ENCODE measurements at regions of chr2 and their contacts with region 1.

Region 1: DNA sequence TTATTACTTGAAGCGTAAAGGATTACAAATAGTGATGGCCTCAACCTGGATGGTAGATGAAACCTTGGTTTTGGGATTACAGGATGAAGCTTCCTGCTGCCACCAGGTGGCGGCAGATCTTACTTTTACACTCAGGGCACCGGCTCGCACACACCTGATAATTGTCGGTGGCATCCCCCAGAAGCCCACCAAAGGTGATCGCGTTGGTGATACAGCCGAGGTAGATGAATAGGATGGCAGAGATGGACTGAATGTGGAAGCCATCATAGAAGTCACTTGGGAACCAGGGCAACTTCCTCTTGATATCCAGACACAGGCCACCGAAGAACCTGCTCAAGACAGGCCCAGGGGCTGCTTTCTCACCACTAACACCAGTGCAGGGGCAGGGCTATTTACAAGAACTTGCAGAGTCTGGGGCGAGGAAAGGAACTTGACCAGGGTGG is 51.8 kb downstream of the MTHFD2 start:
- DNase-seq: no peak
- H3K4me3 ChIP-seq: no peak overlapping the region
- CTCF ChIP-seq: peak; percentile 67

Region 2: GRCh38 chr2:73896362-73897239 is 353.6 kb before region 1 on chr2:
- CTCF ChIA-PET with region 1: no interaction called
- POLR2A ChIA-PET with region 1: no interaction called
- DNase-seq: peak; percentile 53
- H3K4me3 ChIP-seq: peak overlapping the region; percentile 6
- CTCF ChIP-seq: no peak

Region 3: GRCh38 chr2:74104839-74105238 is 145.4 kb before region 1 on chr2:
- CTCF ChIA-PET with region 1: no interaction called
- POLR2A ChIA-PET with region 1: no interaction called
- DNase-seq: no peak
- H3K4me3 ChIP-seq: no peak overlapping the region
- CTCF ChIP-seq: no peak

Region 4: DNA sequence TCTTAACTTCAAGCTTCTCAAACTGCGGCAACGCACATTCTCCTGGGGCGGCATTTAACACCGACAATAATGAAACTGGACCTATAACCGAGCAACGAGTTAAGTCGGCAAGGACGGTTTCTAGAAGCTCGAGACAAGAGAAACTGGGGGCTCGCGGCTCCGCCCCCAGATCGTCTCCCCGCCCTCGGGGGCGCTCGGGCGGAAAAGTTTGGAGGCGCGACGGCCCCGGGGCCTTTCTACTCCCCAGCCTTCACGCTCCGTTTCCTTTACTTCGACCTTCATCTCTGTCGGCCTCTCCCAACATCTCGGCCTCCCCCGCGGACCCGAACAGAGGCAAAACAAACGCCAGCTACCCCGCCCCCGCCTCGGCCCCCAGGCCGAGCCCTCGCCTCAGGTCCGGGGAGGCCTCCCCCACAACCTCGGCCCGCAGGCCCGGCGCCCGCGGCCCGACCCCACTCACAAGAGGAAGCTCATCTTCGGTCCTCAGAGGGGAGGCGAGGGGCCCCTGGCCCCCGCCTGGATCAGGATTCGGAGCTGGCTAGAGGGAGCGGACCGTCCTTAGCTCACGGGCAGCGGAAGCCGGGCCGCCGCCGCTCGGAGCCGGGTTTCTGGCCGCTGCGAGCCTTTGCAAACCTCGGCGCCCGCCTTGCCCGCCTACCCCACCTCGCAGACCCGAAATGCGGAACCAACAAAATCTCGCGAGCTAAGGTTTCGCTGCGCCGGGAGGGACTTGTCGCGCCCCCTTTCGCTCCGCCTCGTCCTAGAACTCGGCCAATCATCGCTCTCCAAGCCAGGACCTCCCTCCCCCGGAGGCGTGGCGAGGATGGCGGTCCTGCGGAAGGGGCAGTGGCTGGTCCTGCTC is 71.8 kb before region 1 on chr2 and contains the start of gene MOB1A:
- CTCF ChIA-PET with region 1: no interaction called
- POLR2A ChIA-PET with region 1: no interaction called
- DNase-seq: peak; percentile 85
- H3K4me3 ChIP-seq: peak within 1 kb of the TSS; percentile 77
- CTCF ChIP-seq: no peak

Region 5: DNA sequence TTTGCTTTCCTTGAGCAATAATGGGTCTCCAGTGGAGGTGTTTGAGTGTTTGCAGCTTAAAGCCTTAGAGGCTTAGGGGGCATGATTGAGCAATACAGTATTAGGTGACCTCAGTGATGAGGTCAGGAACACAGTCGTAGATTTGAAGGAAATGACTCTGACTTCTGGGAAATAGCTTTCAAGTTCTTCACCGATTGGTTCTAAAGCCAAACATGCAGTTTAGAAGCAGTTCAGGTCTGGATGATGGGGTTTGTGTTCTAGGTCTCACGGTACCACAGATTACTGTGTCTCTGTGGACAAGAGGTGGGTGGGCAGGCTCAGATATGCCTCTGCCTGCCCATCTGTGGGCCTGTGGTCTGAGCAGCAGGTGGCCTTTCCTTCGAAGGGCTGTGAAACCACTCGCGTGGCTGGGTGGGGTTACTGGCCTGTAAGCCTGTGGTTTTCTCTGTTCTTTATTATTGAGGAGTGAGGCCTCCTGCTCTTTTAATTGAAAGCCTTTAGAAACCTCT is 44.0 kb before region 1 on chr2:
- CTCF ChIA-PET with region 1: interaction called, 10 read pairs
- POLR2A ChIA-PET with region 1: no interaction called
- DNase-seq: no peak
- H3K4me3 ChIP-seq: no peak overlapping the region
- CTCF ChIP-seq: no peak

Region 6: GRCh38 chr2:74238879-74239278 is 11.3 kb before region 1 on chr2:
- CTCF ChIA-PET with region 1: interaction called, 64 read pairs
- POLR2A ChIA-PET with region 1: no interaction called
- DNase-seq: no peak
- H3K4me3 ChIP-seq: no peak overlapping the region
- CTCF ChIP-seq: no peak

Region 7: GRCh38 chr2:74267068-74267467 is 16.9 kb after region 1 on chr2:
- CTCF ChIA-PET with region 1: interaction called, 55 read pairs
- POLR2A ChIA-PET with region 1: no interaction called
- DNase-seq: no peak
- H3K4me3 ChIP-seq: no peak overlapping the region
- CTCF ChIP-seq: no peak

Region 8: GRCh38 chr2:74399785-74400184 is 149.6 kb after region 1 on chr2:
- CTCF ChIA-PET with region 1: interaction called, 22 read pairs
- POLR2A ChIA-PET with region 1: no interaction called
- DNase-seq: no peak
- H3K4me3 ChIP-seq: no peak overlapping the region
- CTCF ChIP-seq: peak; percentile 8